Activated B cell treated with CpG ODN at 0.5 μM for 24 hours (primary cell): ENCODE measurements at regions of chr6 and their contacts with region 1.

Region 1: GRCh38 chr6:110389689-110390382 is 25.5 kb downstream of the DDO start:
- DNase-seq: no peak
- ATAC-seq: no peak
- H3K4me3 Mint-ChIP-seq: no peak overlapping the region
- H3K27ac Mint-ChIP-seq: no peak overlapping the region
- H3K4me1 Mint-ChIP-seq: no peaks in the 10 kb centered on the region
- H3K27me3 Mint-ChIP-seq: no peaks in the 10 kb centered on the region
- CTCF ChIP-seq: no peak

Region 2: GRCh38 chr6:109526905-109527628 is 862.8 kb before region 1 on chr6:
- CTCF ChIA-PET with region 1: interaction called, 14 read pairs
- POLR2A ChIA-PET with region 1: no interaction called
- intact Hi-C with region 1: loop called (anchors 1 kb)
- DNase-seq: peak; percentile 27
- ATAC-seq: peak; percentile 58
- H3K4me3 Mint-ChIP-seq: no peak overlapping the region
- H3K27ac Mint-ChIP-seq: no peak overlapping the region
- H3K4me1 Mint-ChIP-seq: peaks cover 2% of the 10 kb centered on the region
- H3K27me3 Mint-ChIP-seq: no peaks in the 10 kb centered on the region
- CTCF ChIP-seq: no peak

Region 3: DNA sequence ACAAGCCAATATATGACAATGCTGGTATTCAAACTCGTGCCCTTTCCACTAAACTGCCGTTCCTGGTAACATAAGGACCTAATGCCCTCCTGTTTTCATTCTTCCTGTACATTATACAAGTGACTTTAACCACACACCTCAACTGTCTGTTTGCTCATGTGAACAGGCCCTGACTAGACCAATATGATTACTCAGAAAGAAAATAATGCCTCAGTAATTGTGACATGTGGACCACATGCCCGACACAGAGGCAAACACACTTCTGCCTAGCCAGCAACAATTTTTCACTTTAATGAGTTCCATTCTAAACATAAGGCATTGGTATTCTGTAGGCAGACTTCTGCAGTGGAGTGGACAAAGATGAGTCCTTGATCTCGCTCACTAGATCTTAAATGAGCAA is 56.6 kb after region 1 on chr6:
- CTCF ChIA-PET with region 1: no interaction called
- POLR2A ChIA-PET with region 1: no interaction called
- intact Hi-C with region 1: no loop called
- DNase-seq: no peak
- ATAC-seq: no peak
- H3K4me3 Mint-ChIP-seq: no peak overlapping the region
- H3K27ac Mint-ChIP-seq: no peak overlapping the region
- H3K4me1 Mint-ChIP-seq: no peaks in the 10 kb centered on the region
- H3K27me3 Mint-ChIP-seq: peaks cover 2% of the 10 kb centered on the region
- CTCF ChIP-seq: no peak